Tibial artery (tissue), 4 donors: ENCODE measurements at regions of chr19 and their contacts with region 1.

Region 1: GRCh38 chr19:33778089-33778791 is 18.4 kb upstream of the KCTD15 start:
- DNase-seq: peak; percentile 56 to 82
- H3K4me3 ChIP-seq: no peak overlapping the region
- H3K27ac ChIP-seq: no peak overlapping the region
- H3K4me1 ChIP-seq: peaks cover 0 to 27% (median 13%) of the 10 kb centered on the region in 4 donors
- H3K27me3 ChIP-seq: peaks cover 0 to 84% of the 10 kb centered on the region in 2 donors
- CTCF ChIP-seq: peak; percentile 100

Region 2: GRCh38 chr19:33235269-33235995 is 542.8 kb before region 1 on chr19:
- intact Hi-C with region 1: loop called (anchors 10 kb)
- DNase-seq: peak; percentile 83 to 84
- H3K4me3 ChIP-seq: no peak overlapping the region
- H3K27ac ChIP-seq: no peak overlapping the region
- H3K4me1 ChIP-seq: peaks cover 0 to 4% (median 0%) of the 10 kb centered on the region in 4 donors
- H3K27me3 ChIP-seq: peaks cover 0 to 43% of the 10 kb centered on the region in 2 donors
- CTCF ChIP-seq: peak; percentile 82 to 83

Region 3: DNA sequence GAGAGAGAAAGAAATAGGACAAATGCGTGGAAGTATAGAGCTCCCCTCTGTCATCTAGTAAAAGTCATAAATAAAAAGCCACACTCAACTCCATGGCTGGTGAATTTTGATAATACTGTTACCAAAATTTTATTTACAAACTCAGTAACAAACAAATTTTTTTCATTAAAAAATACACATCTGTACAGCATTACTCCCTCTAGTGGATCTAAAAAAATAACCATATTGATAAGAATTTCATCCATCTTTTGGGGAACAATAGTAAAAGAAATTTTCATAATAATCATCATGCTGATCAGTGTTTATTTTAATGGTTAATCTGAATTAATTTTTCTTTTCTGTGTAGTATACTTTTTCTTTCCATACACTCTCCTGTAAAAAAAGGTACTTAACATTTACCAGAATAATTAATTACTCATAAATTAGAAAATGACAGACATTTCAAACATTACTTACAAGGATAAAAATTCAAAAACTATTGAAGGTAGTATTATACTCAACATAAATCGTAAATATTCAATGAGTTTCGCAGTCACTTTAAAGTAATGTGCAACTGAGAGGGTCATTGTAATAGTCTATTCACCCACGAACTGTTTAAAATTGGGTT is 220.6 kb after region 1 on chr19:
- intact Hi-C with region 1: loop called (anchors 2 kb)
- DNase-seq: no peak
- H3K4me3 ChIP-seq: no peak overlapping the region
- H3K27ac ChIP-seq: no peak overlapping the region
- H3K4me1 ChIP-seq: no peaks in the 10 kb centered on the region
- H3K27me3 ChIP-seq: peaks cover 0 to 6% of the 10 kb centered on the region in 2 donors
- CTCF ChIP-seq: peak; percentile 13 to 31

Region 4: GRCh38 chr19:34096020-34096915 is 318.0 kb after region 1 on chr19:
- intact Hi-C with region 1: loop called (anchors 5 kb)
- DNase-seq: no peak
- H3K4me3 ChIP-seq: no peak overlapping the region
- H3K27ac ChIP-seq: no peak overlapping the region
- H3K4me1 ChIP-seq: no peaks in the 10 kb centered on the region
- H3K27me3 ChIP-seq: peaks cover 0 to 2% of the 10 kb centered on the region in 2 donors
- CTCF ChIP-seq: peak; percentile 37 to 50

Region 5: GRCh38 chr19:34145741-34146202 is 367.5 kb after region 1 on chr19:
- intact Hi-C with region 1: loop called (anchors 5 kb)
- DNase-seq: peak in 1 of 2 donors; percentile 33
- H3K4me3 ChIP-seq: no peak overlapping the region
- H3K27ac ChIP-seq: no peak overlapping the region
- H3K4me1 ChIP-seq: no peaks in the 10 kb centered on the region
- H3K27me3 ChIP-seq: no peaks in the 10 kb centered on the region
- CTCF ChIP-seq: peak; percentile 76 to 78